Activated naive CD4-positive, alpha-beta T cell treated with anti-CD3 and anti-CD28 coated beads for 36 hours (primary cell): ENCODE measurements at regions of chr3 and their contacts with region 1.

Region 1: DNA sequence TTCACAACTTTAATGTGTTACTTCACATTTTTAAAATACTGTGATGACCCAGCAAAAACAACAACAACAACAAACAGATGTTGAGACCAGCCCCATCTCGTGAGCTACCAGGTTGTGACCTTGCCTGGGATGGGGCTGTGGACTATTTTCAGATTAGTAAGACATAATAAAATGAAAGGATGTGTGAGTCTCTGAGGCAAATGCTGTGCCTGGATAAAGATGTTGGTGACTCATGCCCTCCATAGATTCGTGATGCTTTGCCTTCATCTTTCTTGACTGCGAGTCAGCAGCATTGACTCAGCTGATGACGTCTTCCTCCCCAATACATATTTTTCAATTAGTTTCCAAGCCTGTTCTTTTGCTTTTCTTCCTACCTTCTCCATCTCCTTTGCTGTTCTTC is 453.0 kb upstream of the CFAP20DC start:
- DNase-seq: peak; percentile 73
- H3K4me3 Mint-ChIP-seq: no peak overlapping the region
- H3K27ac Mint-ChIP-seq: no peak overlapping the region
- H3K4me1 Mint-ChIP-seq: peaks cover 18% of the 10 kb centered on the region
- H3K27me3 Mint-ChIP-seq: no peaks in the 10 kb centered on the region

Region 2: DNA sequence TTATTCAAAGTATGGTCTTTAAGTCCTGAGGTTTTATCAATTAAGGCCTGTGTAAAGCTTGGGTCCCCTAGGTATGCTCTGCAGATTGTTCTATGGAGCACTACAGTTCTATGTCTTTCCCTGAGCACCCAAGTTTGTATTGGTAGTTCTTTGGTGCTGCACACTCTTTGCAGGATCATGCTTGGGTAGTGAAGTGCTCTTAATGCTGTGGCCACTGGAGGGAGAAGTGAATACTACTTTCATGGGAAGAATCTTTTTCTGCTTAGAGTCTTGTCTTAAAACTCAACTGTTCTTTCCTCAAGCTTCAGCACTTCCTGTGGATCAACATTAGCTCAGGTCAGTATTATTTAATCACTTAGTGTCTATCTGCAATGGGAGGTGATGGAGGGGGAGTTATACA is 359.4 kb before region 1 on chr3:
- CTCF ChIA-PET with region 1: no interaction called
- intact Hi-C with region 1: no loop called
- DNase-seq: no peak
- H3K4me3 Mint-ChIP-seq: no peak overlapping the region
- H3K27ac Mint-ChIP-seq: no peak overlapping the region
- H3K4me1 Mint-ChIP-seq: no peaks in the 10 kb centered on the region
- H3K27me3 Mint-ChIP-seq: peaks cover 3% of the 10 kb centered on the region

Region 3: GRCh38 chr3:59469948-59470723 is 32.7 kb before region 1 on chr3:
- CTCF ChIA-PET with region 1: no interaction called
- intact Hi-C with region 1: loop called (anchors 2 kb)
- DNase-seq: peak; percentile 63
- H3K4me3 Mint-ChIP-seq: no peak overlapping the region
- H3K27ac Mint-ChIP-seq: no peak overlapping the region
- H3K4me1 Mint-ChIP-seq: peaks cover 28% of the 10 kb centered on the region
- H3K27me3 Mint-ChIP-seq: no peaks in the 10 kb centered on the region

Region 4: DNA sequence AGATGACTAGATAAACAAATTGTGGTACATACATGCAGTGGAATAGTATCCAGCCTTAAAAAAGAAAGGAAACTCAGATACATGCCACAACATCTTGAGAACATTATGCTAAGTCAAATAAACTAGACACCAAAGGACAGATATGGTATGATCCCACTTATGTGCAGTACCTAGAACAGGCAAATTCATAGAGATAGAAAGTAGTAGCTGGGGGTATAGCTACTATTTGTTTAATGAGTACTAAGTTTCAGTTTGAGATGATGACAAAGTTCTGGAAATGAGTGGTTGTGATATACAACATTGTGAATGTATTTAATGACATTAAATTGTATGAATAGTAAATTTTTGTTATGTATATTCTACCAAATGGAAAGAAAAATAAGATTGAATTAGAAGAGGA is 24.2 kb after region 1 on chr3:
- CTCF ChIA-PET with region 1: no interaction called
- intact Hi-C with region 1: loop called (anchors 1 kb)
- DNase-seq: no peak
- H3K4me3 Mint-ChIP-seq: no peak overlapping the region
- H3K27ac Mint-ChIP-seq: no peak overlapping the region
- H3K4me1 Mint-ChIP-seq: peaks cover 15% of the 10 kb centered on the region
- H3K27me3 Mint-ChIP-seq: peaks cover 2% of the 10 kb centered on the region